ENCODE measurements at regions of chr17 and their contacts with region 1.

Region 1: GRCh38 chr17:40803617-40804082 is 3.9 kb upstream of the KRT28 start:
- DNase-seq: peak; percentile 62
- H3K4me3 ChIP-seq: no peak overlapping the region
- H3K27ac ChIP-seq: no peak overlapping the region
- H3K4me1 ChIP-seq: no peaks in the 10 kb centered on the region
- CTCF ChIP-seq: peak; percentile 93

Region 2: GRCh38 chr17:40622509-40622928 is 181.1 kb before region 1 on chr17:
- CTCF ChIA-PET with region 1: no interaction called
- POLR2A ChIA-PET with region 1: no interaction called
- intact Hi-C with region 1: loop called (anchors 5 kb)
- DNase-seq: no peak
- H3K4me3 ChIP-seq: no peak overlapping the region
- H3K27ac ChIP-seq: no peak overlapping the region
- H3K4me1 ChIP-seq: peaks cover 41% of the 10 kb centered on the region
- CTCF ChIP-seq: no peak

Region 3: DNA sequence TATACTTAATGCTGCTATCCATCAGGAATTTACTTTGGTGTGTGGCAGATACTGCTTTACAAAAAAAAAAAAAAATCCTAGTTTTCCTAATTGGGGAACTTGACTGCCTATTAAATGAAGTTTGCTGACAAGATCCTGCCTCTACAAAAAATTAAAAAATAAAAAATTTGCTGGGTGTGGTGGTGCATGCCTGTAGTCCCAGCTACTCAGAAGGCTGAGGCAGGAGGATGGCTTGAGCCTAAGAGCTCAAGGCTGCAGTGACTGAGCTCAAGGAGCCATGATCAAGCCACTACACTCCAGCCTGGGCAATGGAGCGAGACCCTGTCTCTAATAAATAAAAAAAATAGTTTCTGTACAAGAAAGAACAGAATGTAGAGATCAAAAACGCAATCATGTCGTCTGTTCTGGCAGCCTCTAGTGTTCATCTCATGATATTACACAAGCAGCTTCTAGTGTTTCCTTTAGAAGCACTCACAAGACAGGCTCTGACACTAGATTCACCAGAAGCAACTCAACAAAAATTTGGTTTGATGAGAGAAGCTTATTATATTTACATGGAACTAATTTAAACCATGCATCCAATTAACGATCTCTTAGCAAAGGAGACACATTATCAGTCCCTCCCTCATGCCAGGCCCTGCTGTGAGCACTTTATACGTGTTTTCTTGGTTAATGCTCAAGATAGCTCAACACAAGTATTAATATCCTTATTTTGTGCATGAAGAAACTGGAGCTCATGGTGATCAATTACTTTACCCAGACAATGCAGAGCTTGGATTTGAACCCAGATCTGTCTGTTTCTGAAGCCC is 518.6 kb after region 1 on chr17:
- CTCF ChIA-PET with region 1: no interaction called
- POLR2A ChIA-PET with region 1: no interaction called
- intact Hi-C with region 1: loop called (anchors 10 kb)
- DNase-seq: peak; percentile 46
- H3K4me3 ChIP-seq: no peak overlapping the region
- H3K27ac ChIP-seq: no peak overlapping the region
- H3K4me1 ChIP-seq: no peaks in the 10 kb centered on the region
- CTCF ChIP-seq: peak; percentile 80